ENCODE measurements at regions of chr7 and their contacts with region 1.

Region 1: GRCh38 chr7:47444379-47445057 is 137.4 kb downstream of the TNS3 start:
- DNase-seq: no peak
- H3K4me3 Mint-ChIP-seq: no peak overlapping the region
- H3K27ac Mint-ChIP-seq: no peak overlapping the region
- H3K4me1 Mint-ChIP-seq: no peaks in the 10 kb centered on the region
- H3K27me3 Mint-ChIP-seq: no peaks in the 10 kb centered on the region

Region 2: GRCh38 chr7:47371729-47372368 is 72.7 kb before region 1 on chr7:
- intact Hi-C with region 1: no loop called
- DNase-seq: no peak
- H3K4me3 Mint-ChIP-seq: no peak overlapping the region
- H3K27ac Mint-ChIP-seq: no peak overlapping the region
- H3K4me1 Mint-ChIP-seq: no peaks in the 10 kb centered on the region
- H3K27me3 Mint-ChIP-seq: no peaks in the 10 kb centered on the region

Region 3: GRCh38 chr7:47536661-47537611 is 92.4 kb after region 1 on chr7:
- intact Hi-C with region 1: loop called (anchors 10 kb)
- DNase-seq: no peak
- H3K4me3 Mint-ChIP-seq: no peak overlapping the region
- H3K27ac Mint-ChIP-seq: no peak overlapping the region
- H3K4me1 Mint-ChIP-seq: no peaks in the 10 kb centered on the region
- H3K27me3 Mint-ChIP-seq: peaks cover 7% of the 10 kb centered on the region

Region 4: DNA sequence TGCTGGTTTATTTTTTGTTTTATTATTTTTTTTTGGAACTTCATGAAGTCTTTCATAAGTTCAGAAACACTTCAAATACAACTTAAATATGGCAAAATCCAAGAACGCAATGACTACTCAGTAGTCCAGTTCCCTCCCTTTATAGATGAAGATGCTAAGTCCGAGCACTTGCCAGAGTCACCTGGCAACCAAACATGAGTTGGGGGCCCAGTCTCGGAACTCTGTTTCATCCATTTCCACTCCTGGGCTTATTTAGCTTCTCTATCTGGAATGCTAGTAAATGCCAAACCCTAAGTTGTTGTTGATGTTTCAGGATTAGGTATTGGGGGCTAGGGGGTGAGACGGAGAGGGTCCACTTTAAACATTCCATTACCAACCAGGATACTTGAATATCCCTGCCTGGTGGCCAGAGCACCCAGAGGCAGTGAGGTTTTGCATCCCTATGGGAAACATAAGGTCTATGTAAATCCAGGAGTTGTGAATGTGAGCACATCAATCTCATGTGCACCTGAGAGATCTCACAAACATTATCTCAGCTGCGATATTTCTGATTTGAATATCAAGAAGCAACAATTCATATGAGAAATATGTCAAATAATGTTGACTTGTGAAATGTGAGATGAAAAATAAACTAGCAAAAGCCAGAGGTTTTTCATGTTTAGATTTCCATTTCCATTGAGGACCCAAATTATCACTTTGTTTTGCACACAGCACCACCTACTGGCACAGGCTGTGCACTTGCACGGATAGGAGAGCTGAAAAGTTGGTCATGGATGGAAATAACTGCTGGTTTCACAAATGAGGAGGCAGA is 374.5 kb after region 1 on chr7:
- intact Hi-C with region 1: loop called (anchors 1 kb)
- DNase-seq: peak; percentile 2
- H3K4me3 Mint-ChIP-seq: no peak overlapping the region
- H3K27ac Mint-ChIP-seq: no peak overlapping the region
- H3K4me1 Mint-ChIP-seq: no peaks in the 10 kb centered on the region
- H3K27me3 Mint-ChIP-seq: no peaks in the 10 kb centered on the region